ENCODE measurements at regions of chr9 and their contacts with region 1.

Region 1: DNA sequence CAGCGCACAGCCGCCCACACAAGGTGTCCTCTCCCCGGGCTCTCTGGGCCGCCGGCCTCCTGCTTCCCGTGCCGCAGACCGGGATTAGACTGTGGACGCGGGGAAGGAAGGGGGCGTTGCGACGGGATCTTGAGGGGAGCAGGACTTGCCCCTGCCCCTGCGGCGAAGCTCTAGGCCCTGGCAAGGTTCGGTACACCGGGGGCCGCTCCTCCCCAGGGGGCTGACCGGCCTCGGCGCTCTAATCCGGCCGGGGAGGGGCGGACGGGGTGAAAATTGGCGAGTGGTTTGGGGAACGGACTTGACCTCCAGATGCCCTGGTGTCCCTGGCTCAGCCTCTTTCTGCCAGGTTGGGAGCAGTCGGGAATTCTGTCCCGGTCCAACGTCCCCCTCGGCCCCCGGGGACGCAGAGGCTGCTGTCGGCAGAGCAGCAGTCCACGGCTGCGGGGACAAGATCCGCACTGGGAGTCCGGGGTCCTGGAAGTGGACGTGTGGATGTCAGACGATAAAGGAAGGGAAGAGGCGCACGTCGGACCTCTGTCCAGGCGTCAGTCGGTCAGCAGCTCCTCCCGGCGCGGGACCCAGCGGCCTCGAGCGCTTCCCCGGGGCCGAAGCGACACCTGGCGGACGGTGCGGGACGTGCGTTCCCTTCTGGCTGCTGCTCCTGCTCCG is 1.9 kb upstream of the CNTFR start:
- DNase-seq: peak; percentile 94
- H3K4me3 Mint-ChIP-seq: peak overlapping the region; percentile 73
- H3K27ac Mint-ChIP-seq: no peak overlapping the region
- H3K4me1 Mint-ChIP-seq: peaks cover 26% of the 10 kb centered on the region
- H3K27me3 Mint-ChIP-seq: peaks cover 74% of the 10 kb centered on the region

Region 2: GRCh38 chr9:33076358-33077004 is 1514.9 kb before region 1 on chr9 and contains the start of gene SMU1:
- intact Hi-C with region 1: no loop called
- DNase-seq: peak; percentile 99
- H3K4me3 Mint-ChIP-seq: peak within 1 kb of the TSS; percentile 98
- H3K27ac Mint-ChIP-seq: peak within 1 kb of the TSS; percentile 97
- H3K4me1 Mint-ChIP-seq: peaks cover 19% of the 10 kb centered on the region
- H3K27me3 Mint-ChIP-seq: no peaks in the 10 kb centered on the region
- total RNA-seq, gene SMU1: 28.6 and 30.2 TPM in 2 replicates

Region 3: DNA sequence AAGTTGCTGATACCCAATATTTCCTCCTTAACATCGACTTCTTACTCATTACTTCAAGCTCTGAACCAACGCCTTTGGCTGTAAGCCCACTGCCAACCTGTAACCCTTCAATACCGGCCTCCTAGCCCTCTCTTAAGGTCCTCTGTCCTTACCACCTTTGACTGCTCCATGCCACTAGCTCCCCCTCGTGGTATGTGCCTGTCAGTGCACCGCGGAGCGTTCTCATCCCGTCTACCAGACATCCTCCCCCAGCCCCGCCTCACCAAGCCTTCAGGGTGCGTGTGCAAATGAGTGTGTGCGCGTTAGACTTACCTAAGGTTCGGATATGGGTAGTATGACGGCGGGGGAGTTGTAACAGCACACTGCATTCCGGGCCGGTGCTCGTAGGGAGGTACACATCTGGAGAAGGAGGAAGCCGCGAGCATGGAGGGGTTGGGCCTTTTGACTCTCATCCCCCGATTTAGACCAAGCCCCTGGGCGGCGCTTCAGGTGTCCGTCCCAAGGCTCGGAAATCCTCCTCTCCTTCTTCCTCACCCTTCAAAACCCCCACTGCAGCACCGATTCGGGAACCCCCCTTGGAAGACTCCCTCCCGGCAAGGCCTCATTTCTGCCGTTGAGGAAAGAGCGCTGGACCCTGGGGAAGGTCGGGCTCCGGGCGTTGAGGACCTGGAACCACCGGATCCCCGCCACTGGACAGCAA is 211.9 kb before region 1 on chr9:
- intact Hi-C with region 1: no loop called
- DNase-seq: peak; percentile 98
- H3K4me3 Mint-ChIP-seq: peak overlapping the region; percentile 87
- H3K27ac Mint-ChIP-seq: peak overlapping the region; percentile 76
- H3K4me1 Mint-ChIP-seq: peaks cover 42% of the 10 kb centered on the region
- H3K27me3 Mint-ChIP-seq: peaks cover 14% of the 10 kb centered on the region

Region 4: GRCh38 chr9:34403554-34404380 is 187.6 kb before region 1 on chr9:
- intact Hi-C with region 1: loop called (anchors 5 kb)
- DNase-seq: peak; percentile 86
- H3K4me3 Mint-ChIP-seq: no peak overlapping the region
- H3K27ac Mint-ChIP-seq: no peak overlapping the region
- H3K4me1 Mint-ChIP-seq: no peaks in the 10 kb centered on the region
- H3K27me3 Mint-ChIP-seq: no peaks in the 10 kb centered on the region

Region 5: DNA sequence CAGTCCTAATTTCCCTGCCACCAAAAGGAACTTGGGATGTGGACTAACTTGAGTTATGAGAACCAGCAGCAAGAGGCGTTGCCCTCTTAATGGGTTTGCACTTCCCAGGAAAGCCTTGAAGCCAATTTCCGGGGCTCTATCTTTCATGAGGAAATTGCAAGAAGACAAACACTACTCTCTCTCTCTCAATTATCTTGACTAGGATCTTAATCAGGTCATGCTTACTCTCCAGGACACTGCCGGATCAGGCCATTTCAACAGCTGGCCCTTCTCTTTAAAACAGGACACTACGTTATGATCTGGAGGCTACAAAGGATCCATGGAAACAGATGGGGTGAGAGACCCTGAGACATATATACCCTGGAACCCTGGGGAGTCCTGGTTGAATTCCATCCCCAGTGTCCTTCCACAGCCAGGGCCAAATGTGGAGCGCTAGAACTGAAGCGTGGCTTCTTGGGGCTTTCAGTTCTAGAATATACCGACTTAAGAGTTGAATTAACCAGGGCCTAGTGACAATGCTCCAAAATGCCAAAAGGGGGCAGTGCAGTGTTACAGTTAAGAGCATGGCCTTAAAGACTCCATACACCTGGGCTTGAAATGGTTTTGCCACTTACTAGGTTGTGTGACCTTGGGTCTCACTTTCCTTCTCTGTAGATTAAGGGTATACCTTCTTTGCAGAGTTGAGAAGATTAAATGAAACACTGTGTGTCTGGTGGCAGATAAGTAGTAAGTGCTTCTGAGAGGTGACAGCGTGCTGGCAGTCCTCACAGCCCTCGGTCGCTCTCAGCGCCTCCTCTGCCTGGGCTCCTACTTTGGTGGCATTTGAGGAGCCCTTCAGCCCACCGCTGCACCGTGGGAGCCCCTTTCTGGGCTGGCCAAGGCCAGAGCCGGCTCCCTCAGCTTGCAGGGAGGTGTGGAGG is 154.1 kb before region 1 on chr9:
- intact Hi-C with region 1: loop called (anchors 1 kb)
- DNase-seq: peak; percentile 89
- H3K4me3 Mint-ChIP-seq: no peak overlapping the region
- H3K27ac Mint-ChIP-seq: no peak overlapping the region
- H3K4me1 Mint-ChIP-seq: peaks cover 8% of the 10 kb centered on the region
- H3K27me3 Mint-ChIP-seq: no peaks in the 10 kb centered on the region

Region 6: GRCh38 chr9:34500623-34501267 is 90.6 kb before region 1 on chr9:
- intact Hi-C with region 1: loop called (anchors 2 kb)
- DNase-seq: peak; percentile 93
- H3K4me3 Mint-ChIP-seq: no peak overlapping the region
- H3K27ac Mint-ChIP-seq: no peak overlapping the region
- H3K4me1 Mint-ChIP-seq: peaks cover 6% of the 10 kb centered on the region
- H3K27me3 Mint-ChIP-seq: peaks cover 24% of the 10 kb centered on the region

Region 7: GRCh38 chr9:34546834-34547827 is 44.3 kb before region 1 on chr9:
- intact Hi-C with region 1: loop called (anchors 1 kb)
- DNase-seq: peak; percentile 80
- H3K4me3 Mint-ChIP-seq: no peak overlapping the region
- H3K27ac Mint-ChIP-seq: no peak overlapping the region
- H3K4me1 Mint-ChIP-seq: no peaks in the 10 kb centered on the region
- H3K27me3 Mint-ChIP-seq: peaks cover 12% of the 10 kb centered on the region

Region 8: GRCh38 chr9:34611829-34612630 is 20.6 kb after region 1 on chr9 and contains the start of gene RPP25L:
- intact Hi-C with region 1: no loop called
- DNase-seq: peak; percentile 97
- H3K4me3 Mint-ChIP-seq: peak within 1 kb of the TSS; percentile 96
- H3K27ac Mint-ChIP-seq: peak within 1 kb of the TSS; percentile 97
- H3K4me1 Mint-ChIP-seq: peaks cover 21% of the 10 kb centered on the region
- H3K27me3 Mint-ChIP-seq: no peaks in the 10 kb centered on the region
- total RNA-seq, gene RPP25L: 34.8 and 36.1 TPM in 2 replicates

Region 9: GRCh38 chr9:34675048-34675714 is 83.8 kb after region 1 on chr9:
- intact Hi-C with region 1: no loop called
- DNase-seq: peak; percentile 83
- H3K4me3 Mint-ChIP-seq: no peak overlapping the region
- H3K27ac Mint-ChIP-seq: no peak overlapping the region
- H3K4me1 Mint-ChIP-seq: peaks cover 2% of the 10 kb centered on the region
- H3K27me3 Mint-ChIP-seq: no peaks in the 10 kb centered on the region